Caco-2 (cell line): ENCODE measurements at regions of chr3 and their contacts with region 1.

Region 1: GRCh38 chr3:23916886-23917678 is at the starts of genes NKIRAS1 and RPL15:
- DNase-seq: peak; percentile 97
- H3K4me3 ChIP-seq: peak within 1 kb of the TSS; percentile 92
- H3K4me3 Mint-ChIP-seq: peak within 1 kb of the TSS; percentile 70
- H3K27ac Mint-ChIP-seq: peak within 1 kb of the TSS; percentile 96
- H3K4me1 ChIP-seq: peaks cover 29% of the 10 kb centered on the region
- H3K4me1 Mint-ChIP-seq: peaks cover 12% of the 10 kb centered on the region
- H3K27me3 ChIP-seq: no peaks in the 10 kb centered on the region
- H3K27me3 Mint-ChIP-seq: no peaks in the 10 kb centered on the region
- CTCF ChIP-seq: peak; percentile 4 to 54
- total RNA-seq, gene NKIRAS1: 6.6 and 6.8 TPM in 2 replicates
- total RNA-seq, gene RPL15: 1,611 and 1,698 TPM in 2 replicates

Region 2: GRCh38 chr3:23900744-23901143 is 16.3 kb before region 1 on chr3:
- CTCF ChIA-PET with region 1: no interaction called
- POLR2A ChIA-PET with region 1: interaction called, 7 read pairs
- intact Hi-C with region 1: loop called (anchors 2 kb)
- DNase-seq: peak in 1 of 2 experiments; percentile 37
- H3K4me3 ChIP-seq: no peak overlapping the region
- H3K4me3 Mint-ChIP-seq: no peak overlapping the region
- H3K27ac Mint-ChIP-seq: no peak overlapping the region
- H3K4me1 ChIP-seq: no peaks in the 10 kb centered on the region
- H3K4me1 Mint-ChIP-seq: peaks cover 6% of the 10 kb centered on the region
- H3K27me3 ChIP-seq: no peaks in the 10 kb centered on the region
- H3K27me3 Mint-ChIP-seq: no peaks in the 10 kb centered on the region
- CTCF ChIP-seq: peak; percentile 19 to 28

Region 3: GRCh38 chr3:23945903-23946751 is 29.0 kb after region 1 on chr3:
- CTCF ChIA-PET with region 1: no interaction called
- POLR2A ChIA-PET with region 1: interaction called, 18 read pairs
- intact Hi-C with region 1: loop called (anchors 1 kb)
- DNase-seq: peak; percentile 96 to 98
- H3K4me3 ChIP-seq: peak overlapping the region; percentile 94
- H3K4me3 Mint-ChIP-seq: peak overlapping the region; percentile 94
- H3K27ac Mint-ChIP-seq: peak overlapping the region; percentile 95
- H3K4me1 ChIP-seq: peaks cover 27% of the 10 kb centered on the region
- H3K4me1 Mint-ChIP-seq: peaks cover 21% of the 10 kb centered on the region
- H3K27me3 ChIP-seq: no peaks in the 10 kb centered on the region
- H3K27me3 Mint-ChIP-seq: no peaks in the 10 kb centered on the region
- CTCF ChIP-seq: no peak